GM12878 (cell line): ENCODE measurements at regions of chr10 and their contacts with region 1.

Region 1: GRCh38 chr10:2759233-2759632 is 308.1 kb upstream of the PFKP start:
- DNase-seq: peak; percentile 28
- ATAC-seq: peak; percentile 76
- H3K4me3 ChIP-seq: no peak overlapping the region
- H3K27ac ChIP-seq: no peak overlapping the region
- H3K4me1 ChIP-seq: no peaks in the 10 kb centered on the region
- H3K27me3 ChIP-seq: no peaks in the 10 kb centered on the region
- CTCF ChIP-seq: no peak
- EP300 ChIP-seq: no peak
- POLR2A ChIP-seq: no peak
- RAD21 ChIP-seq: no peak

Region 2: DNA sequence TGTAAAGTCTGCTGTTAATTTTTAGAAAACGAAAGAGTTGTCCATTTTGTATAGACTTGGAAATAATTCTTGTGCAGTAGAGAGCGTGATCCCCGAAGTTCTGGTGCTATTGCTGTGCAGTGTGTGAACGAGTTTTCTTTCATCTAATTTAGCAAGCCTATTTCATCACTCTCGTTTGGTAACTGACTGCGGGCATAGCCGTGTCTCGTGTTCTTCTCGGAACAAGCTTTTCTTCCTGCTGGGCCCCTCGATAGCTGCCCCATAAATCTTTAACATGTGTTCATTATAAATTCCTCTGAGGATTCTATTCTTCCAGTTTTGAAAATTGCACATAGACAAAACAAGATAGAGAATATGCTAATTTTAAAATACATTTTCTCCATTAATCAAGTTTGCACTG is 313.9 kb before region 1 on chr10:
- CTCF ChIA-PET with region 1: no interaction called
- POLR2A ChIA-PET with region 1: no interaction called
- RAD21 ChIA-PET with region 1: no interaction called
- SMC1A ChIA-PET with region 1: no interaction called
- in situ Hi-C with region 1: no loop called
- intact Hi-C with region 1: no loop called
- DNase-seq: no peak
- ATAC-seq: no peak
- H3K4me3 ChIP-seq: no peak overlapping the region
- H3K27ac ChIP-seq: no peak overlapping the region
- H3K4me1 ChIP-seq: no peaks in the 10 kb centered on the region
- H3K27me3 ChIP-seq: no peaks in the 10 kb centered on the region
- CTCF ChIP-seq: no peak
- EP300 ChIP-seq: no peak
- POLR2A ChIP-seq: no peak
- RAD21 ChIP-seq: no peak

Region 3: GRCh38 chr10:2791774-2792443 is 32.7 kb after region 1 on chr10:
- CTCF ChIA-PET with region 1: no interaction called
- POLR2A ChIA-PET with region 1: no interaction called
- RAD21 ChIA-PET with region 1: no interaction called
- SMC1A ChIA-PET with region 1: no interaction called
- in situ Hi-C with region 1: no loop called
- intact Hi-C with region 1: loop called (anchors 2 kb)
- DNase-seq: peak; percentile 87
- ATAC-seq: peak; percentile 98
- H3K4me3 ChIP-seq: no peak overlapping the region
- H3K27ac ChIP-seq: no peak overlapping the region
- H3K4me1 ChIP-seq: no peaks in the 10 kb centered on the region
- H3K27me3 ChIP-seq: no peaks in the 10 kb centered on the region
- CTCF ChIP-seq: no peak
- EP300 ChIP-seq: peak; percentile 85 to 88; a peak in 2 of 4 replicates
- POLR2A ChIP-seq: no peak
- RAD21 ChIP-seq: no peak

Region 4: DNA sequence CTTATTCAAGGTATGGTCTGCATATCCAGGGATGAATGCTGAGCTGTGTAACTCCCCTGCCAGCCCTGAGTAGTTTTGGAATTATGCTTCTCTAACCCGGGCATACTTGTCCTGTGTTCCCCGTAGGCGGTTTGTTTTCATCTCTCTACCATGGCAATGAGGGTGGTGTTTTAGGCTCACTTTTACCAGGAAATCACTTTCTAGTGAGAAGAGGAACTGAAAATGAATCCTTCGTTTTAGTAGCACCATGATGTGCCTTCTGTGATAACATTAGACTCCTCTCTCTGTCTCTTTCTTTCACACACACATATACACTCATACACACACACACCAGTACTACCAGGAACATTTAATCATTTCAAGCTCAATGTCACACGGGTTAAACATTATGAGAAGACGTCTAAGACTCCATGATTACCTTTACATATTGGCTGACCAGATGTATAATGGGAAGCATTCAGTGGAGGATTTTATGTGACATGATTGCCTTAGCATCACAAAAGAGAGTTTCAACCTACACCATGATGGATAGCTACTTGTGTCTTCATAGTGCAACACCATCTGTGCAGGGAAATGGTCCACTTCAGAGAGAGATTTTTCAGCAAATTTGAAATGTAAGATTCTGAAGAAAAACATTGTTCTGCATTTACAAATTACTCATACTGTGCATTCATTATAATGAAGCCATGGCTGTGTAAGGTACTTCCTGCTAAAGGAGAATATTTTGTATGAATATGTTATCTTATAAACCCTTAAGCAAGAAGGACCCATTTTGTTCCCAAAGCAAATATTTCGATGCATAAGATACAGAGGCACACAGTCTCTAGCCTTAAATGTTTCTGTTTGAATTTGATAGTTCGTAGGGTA is 277.2 kb after region 1 on chr10:
- CTCF ChIA-PET with region 1: no interaction called
- POLR2A ChIA-PET with region 1: no interaction called
- RAD21 ChIA-PET with region 1: no interaction called
- SMC1A ChIA-PET with region 1: no interaction called
- in situ Hi-C with region 1: no loop called
- intact Hi-C with region 1: no loop called
- DNase-seq: peak; percentile 52
- ATAC-seq: peak; percentile 97
- H3K4me3 ChIP-seq: no peak overlapping the region
- H3K27ac ChIP-seq: no peak overlapping the region
- H3K4me1 ChIP-seq: peaks cover 3% of the 10 kb centered on the region; the same call in 1 of the 2 replicates
- H3K27me3 ChIP-seq: no peaks in the 10 kb centered on the region
- CTCF ChIP-seq: no peak
- EP300 ChIP-seq: peak in 1 of 2 experiments; percentile 59; a peak in 2 of 4 replicates
- POLR2A ChIP-seq: no peak
- RAD21 ChIP-seq: no peak